Lower leg skin (tissue), 4 donors: ENCODE measurements at regions of chr4 and their contacts with region 1.

Region 1: DNA sequence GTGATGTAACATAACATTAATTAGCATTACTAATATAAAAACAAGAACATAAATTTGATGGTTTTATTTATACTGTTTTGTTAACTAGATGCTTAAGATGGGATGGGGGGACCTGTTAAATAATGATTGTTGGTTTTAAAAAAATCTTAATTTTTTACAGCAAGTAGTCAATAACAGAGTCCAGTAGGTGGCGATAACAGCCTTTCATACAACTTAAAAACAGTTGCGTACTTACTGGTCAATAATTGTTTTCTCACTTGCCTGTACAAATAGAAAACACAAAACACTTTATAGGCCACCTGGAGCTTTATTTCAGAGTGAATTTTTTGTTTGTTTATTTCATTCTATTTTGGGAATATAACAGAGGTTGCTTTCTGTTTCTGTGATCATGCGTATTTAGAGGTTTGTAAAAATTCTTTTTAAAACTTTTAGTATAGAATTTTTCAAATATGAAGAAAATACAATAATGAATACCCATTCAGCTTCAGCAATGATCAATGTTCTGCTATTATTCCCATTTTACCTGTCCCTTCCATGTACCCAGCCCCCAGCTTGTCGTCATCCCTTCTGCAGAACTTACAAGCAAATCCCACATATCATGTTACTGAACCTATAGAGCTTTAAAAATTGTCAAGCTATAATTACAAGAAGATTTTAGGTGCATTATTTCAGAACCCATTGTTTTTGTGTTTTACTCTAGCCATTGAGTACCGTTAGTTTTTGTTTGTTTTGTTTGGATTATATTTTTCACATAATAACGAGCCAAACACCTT is 97.1 kb downstream of the MRPL1 start:
- DNase-seq: no peak
- H3K4me3 ChIP-seq: no peak overlapping the region
- CTCF ChIP-seq: no peak
- POLR2A ChIP-seq: no peak

Region 2: DNA sequence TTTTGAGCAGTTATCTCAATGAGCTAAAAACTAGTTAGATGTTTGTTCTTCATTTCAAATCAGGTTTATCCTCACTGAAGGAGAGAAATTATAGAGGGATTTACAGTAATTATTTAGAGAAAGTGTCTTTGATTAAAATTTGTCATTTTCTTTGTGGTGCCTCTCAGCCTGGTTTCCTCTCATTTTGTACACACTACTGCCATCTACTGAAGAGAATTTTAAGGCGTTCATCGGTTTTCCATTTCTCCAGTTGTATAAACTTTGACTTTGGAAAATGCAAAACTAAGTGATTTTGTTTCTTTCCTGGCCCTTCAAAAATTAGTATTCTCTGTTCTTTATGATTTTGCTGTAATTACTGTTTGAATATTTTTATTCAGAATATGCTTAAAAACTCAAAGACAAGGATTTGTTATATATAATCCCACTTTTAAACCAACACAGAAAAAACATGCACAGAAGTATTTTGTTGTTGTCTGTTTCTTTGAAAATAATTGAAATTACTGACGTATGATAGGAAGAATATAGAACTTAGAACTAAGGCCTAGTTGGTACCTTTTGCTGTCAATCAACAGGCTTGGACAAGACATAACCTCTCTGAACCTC is 557.4 kb after region 1 on chr4:
- intact Hi-C with region 1: loop called (anchors 10 kb)
- DNase-seq: no peak
- H3K4me3 ChIP-seq: no peak overlapping the region
- CTCF ChIP-seq: no peak
- POLR2A ChIP-seq: no peak